PC-3 (cell line): ENCODE measurements at regions of chr10 and their contacts with region 1.

Region 1: GRCh38 chr10:55631071-55631654 is 729.9 kb downstream of the ZWINT start:
- DNase-seq: peak; percentile 86
- ATAC-seq: peak; percentile 89
- H3K4me3 ChIP-seq: peak overlapping the region; percentile 80
- H3K27ac ChIP-seq: no peak overlapping the region
- H3K4me1 ChIP-seq: peaks cover 13% of the 10 kb centered on the region
- H3K27me3 ChIP-seq: peaks cover 13% of the 10 kb centered on the region
- CTCF ChIP-seq: peak; percentile 91

Region 2: DNA sequence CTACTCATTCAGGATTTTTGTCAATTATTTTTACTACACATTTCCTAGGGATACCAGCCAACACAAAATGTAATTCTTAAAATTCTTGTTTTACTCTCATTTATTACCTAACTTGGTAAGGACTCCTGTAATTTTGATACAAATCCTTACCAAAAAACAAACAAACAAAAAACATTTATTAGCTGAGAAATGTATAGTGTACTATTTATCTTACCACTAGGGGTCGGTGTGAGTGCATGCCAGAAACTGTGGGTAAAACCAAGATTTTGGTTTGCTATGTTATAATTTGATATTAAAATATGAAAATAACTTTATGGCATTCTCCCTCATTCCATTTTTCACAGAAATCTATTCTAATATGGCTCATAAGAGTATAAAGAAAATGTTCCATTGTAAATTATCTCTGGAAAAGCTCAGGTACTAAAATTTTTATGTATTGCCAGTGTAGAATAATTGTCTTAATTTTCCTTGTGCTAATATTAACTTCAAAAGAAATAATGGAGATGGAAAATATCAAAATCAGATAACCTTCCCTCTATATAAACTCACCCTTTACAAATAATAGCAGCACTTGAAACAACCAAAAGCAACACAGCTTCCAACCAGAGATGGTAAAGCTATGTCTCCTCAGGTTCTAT is 539.4 kb before region 1 on chr10:
- CTCF ChIA-PET with region 1: interaction called, 3 read pairs
- POLR2A ChIA-PET with region 1: no interaction called
- intact Hi-C with region 1: loop called (anchors 1 kb)
- DNase-seq: peak; percentile 54
- ATAC-seq: no peak
- H3K4me3 ChIP-seq: no peak overlapping the region
- H3K27ac ChIP-seq: no peak overlapping the region
- H3K4me1 ChIP-seq: no peaks in the 10 kb centered on the region
- H3K27me3 ChIP-seq: no peaks in the 10 kb centered on the region
- CTCF ChIP-seq: peak; percentile 91

Region 3: DNA sequence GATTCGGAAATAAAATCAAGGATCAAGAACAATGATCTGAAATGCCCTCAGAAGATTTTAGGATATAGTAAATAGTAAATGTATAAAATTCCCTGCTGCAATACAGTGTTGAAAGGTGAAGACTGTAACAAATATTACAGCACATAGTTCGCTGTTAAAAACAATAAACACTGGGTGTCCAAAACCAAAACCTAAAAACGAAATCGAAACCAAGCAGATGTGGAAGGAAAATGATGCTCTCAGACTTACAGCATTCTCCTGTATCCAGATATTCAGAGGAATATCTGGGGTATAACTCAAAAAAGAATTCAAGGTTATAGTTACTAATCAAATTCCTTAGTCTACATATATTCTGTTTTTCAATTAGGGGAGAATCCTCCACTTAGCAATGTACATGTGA is 122.0 kb before region 1 on chr10:
- CTCF ChIA-PET with region 1: no interaction called
- POLR2A ChIA-PET with region 1: no interaction called
- intact Hi-C with region 1: loop called (anchors 5 kb)
- DNase-seq: peak; percentile 33
- ATAC-seq: peak; percentile 66
- H3K4me3 ChIP-seq: peak overlapping the region; percentile 66
- H3K27ac ChIP-seq: no peak overlapping the region
- H3K4me1 ChIP-seq: no peaks in the 10 kb centered on the region
- H3K27me3 ChIP-seq: no peaks in the 10 kb centered on the region
- CTCF ChIP-seq: no peak

Region 4: DNA sequence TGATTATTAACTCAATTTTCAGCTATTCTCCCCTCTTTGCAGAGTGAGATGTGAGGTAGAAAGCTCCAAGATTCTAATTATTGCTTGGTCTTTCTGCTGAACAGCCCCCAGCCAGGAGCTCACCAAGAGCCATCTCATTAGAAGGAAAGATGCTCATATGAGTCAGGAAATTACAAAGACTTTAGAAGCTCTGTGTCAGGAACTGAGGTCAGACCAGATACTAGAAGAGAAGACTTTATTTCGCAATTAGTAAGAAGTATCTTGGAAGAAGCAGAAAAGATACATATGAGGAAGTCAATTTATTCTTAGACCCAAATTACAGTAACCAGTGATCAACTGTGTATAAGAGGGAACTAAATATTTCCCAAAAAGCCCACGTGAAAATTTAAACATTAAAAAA is 102.9 kb after region 1 on chr10:
- CTCF ChIA-PET with region 1: no interaction called
- POLR2A ChIA-PET with region 1: no interaction called
- intact Hi-C with region 1: loop called (anchors 2 kb)
- DNase-seq: no peak
- ATAC-seq: no peak
- H3K4me3 ChIP-seq: no peak overlapping the region
- H3K27ac ChIP-seq: no peak overlapping the region
- H3K4me1 ChIP-seq: no peaks in the 10 kb centered on the region
- H3K27me3 ChIP-seq: no peaks in the 10 kb centered on the region
- CTCF ChIP-seq: no peak

Region 5: GRCh38 chr10:55867848-55868247 is 236.7 kb after region 1 on chr10:
- CTCF ChIA-PET with region 1: no interaction called
- POLR2A ChIA-PET with region 1: no interaction called
- intact Hi-C with region 1: no loop called
- DNase-seq: no peak
- ATAC-seq: no peak
- H3K4me3 ChIP-seq: no peak overlapping the region
- H3K27ac ChIP-seq: no peak overlapping the region
- H3K4me1 ChIP-seq: no peaks in the 10 kb centered on the region
- H3K27me3 ChIP-seq: no peaks in the 10 kb centered on the region
- CTCF ChIP-seq: no peak